Right cardiac atrium (tissue), 5 donors: ENCODE measurements at regions of chr11 and their contacts with region 1.

Region 1: DNA sequence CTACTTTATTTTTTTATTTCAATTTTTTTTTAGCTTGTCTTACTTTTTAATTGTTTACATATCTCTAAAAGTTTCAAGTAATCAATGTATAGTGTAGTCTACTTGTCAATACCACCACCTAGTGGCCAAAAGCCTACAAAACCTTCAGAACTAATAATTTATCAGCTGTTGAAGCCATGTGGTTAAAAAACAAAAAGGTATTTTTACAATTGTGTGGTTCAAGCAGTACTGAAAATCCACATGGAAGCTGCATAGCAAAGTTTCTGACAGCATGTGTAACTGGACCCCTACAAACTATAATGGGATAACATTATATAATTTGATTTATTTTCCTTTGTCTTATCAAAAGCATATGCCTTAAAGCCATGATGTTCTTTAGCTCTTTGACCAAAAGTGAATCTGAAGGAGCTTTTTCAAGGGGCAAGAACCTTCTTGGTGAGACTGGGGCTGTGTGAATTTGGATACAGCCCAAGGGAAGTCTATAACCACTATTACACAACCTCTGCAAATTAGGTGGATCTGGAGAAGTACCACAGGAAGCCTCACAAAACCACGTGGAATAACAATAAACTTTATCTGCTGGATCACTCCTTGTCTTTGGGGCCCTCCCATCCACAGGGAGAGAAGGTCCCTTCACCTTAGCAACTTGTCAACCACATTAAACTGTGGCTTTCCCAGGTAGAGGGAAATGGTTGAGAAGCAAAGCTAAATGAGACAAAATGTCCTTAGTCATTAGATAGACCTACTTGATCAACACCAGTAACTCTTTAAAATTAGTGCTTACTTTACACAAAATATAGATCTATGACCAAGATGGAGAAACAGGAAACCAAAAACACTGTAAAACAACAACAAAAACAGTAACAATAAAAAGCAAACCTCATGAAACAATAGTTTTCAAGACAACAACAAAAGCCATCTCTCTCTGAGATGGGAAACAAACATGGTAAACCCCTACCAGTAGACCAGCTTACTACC is 9.9 kb downstream of the NARS2 start:
- DNase-seq: no peak
- ATAC-seq: peak; percentile 42 to 52
- H3K4me3 ChIP-seq: no peak overlapping the region
- H3K27ac ChIP-seq: no peak overlapping the region
- H3K4me1 ChIP-seq: no peaks in the 10 kb centered on the region
- H3K27me3 ChIP-seq: no peaks in the 10 kb centered on the region

Region 2: DNA sequence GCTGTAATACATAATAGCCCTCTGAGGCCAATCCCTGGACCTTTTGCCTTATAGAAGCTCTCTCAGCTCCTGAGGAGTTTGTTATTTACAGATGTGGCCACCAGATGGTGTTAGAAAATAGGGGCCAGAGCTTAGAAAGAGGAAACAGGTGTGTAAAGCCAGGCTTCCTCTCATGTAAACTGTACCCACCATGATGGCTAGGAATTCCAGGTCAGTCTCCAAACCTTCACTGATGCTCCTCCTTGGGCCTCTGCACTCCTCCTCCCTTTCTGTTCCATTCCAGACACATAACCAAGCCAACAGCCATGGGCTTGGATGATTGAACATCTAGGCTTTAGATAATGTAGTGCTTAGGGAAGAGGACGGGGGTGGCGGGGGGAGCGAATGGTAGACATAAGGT is 336.3 kb before region 1 on chr11:
- intact Hi-C with region 1: loop called in 3 of 4 experiments (anchors 5 to 10 kb)
- DNase-seq: no peak
- ATAC-seq: peak; percentile 43 to 58
- H3K4me3 ChIP-seq: no peak overlapping the region
- H3K27ac ChIP-seq: no peak overlapping the region
- H3K4me1 ChIP-seq: peaks cover 10% of the 10 kb centered on the region
- H3K27me3 ChIP-seq: no peaks in the 10 kb centered on the region

Region 3: DNA sequence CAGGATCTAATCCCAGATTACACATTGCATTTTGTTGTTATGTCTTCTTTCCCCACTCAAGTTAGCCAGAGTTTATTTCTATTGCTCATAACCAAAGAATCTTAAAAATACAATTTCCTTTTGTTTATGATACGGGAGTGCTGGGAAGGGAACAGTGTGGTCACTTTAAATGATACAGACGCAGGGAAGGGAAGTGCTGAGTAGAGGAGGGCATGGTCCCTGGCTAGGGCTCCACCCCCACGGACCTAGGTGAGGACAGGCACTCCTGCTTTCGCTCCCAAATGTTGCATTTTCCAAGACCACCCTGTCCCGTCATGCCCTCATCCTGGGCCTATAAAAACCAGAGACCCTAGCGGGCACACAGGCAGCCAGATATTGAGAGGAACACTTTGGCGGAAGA is 40.5 kb after region 1 on chr11:
- intact Hi-C with region 1: no loop called
- DNase-seq: no peak
- ATAC-seq: no peak
- H3K4me3 ChIP-seq: no peak overlapping the region
- H3K27ac ChIP-seq: no peak overlapping the region
- H3K4me1 ChIP-seq: no peaks in the 10 kb centered on the region
- H3K27me3 ChIP-seq: no peaks in the 10 kb centered on the region

Region 4: DNA sequence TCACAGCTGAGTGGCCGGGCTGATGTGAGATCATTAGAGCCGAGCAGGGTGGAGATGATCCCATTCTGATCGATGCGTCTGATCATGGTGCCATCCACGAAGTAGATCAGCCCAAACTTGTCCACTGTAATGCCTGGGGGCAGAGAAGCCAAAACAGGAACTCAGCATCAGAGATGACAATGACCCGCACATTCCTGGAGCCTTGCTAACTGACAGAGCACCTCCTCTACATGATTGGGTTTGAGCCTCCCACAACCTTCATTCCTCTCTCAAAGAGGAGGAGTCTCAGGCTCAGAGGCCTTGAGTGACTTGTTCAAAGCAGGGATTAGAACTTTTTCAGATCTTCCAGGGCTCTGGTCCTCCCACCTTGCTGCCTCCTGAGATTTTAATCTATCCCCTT is 143.6 kb after region 1 on chr11:
- intact Hi-C with region 1: no loop called
- DNase-seq: no peak
- ATAC-seq: no peak
- H3K4me3 ChIP-seq: no peak overlapping the region
- H3K27ac ChIP-seq: no peak overlapping the region
- H3K4me1 ChIP-seq: no peaks in the 10 kb centered on the region
- H3K27me3 ChIP-seq: no peaks in the 10 kb centered on the region